Endothelial cell of umbilical vein (primary cell): ENCODE measurements at regions of chr5 and their contacts with region 1.

Region 1: GRCh38 chr5:15105796-15106393 is 234.3 kb upstream of the ANKH start:
- DNase-seq: peak; percentile 62
- H3K4me3 ChIP-seq: no peak overlapping the region
- H3K27ac ChIP-seq: no peak overlapping the region
- H3K4me1 ChIP-seq: no peaks in the 10 kb centered on the region
- H3K27me3 ChIP-seq: peaks cover 0 to 7% of the 10 kb centered on the region in 2 experiments
- CTCF ChIP-seq: peak; percentile 77 to 79
- POLR2A ChIP-seq: no peak

Region 2: GRCh38 chr5:15026011-15026893 is 79.6 kb before region 1 on chr5:
- CTCF ChIA-PET with region 1: no interaction called
- POLR2A ChIA-PET with region 1: no interaction called
- dilution Hi-C with region 1: no loop called
- intact Hi-C with region 1: no loop called
- DNase-seq: no peak
- H3K4me3 ChIP-seq: no peak overlapping the region
- H3K27ac ChIP-seq: no peak overlapping the region
- H3K4me1 ChIP-seq: no peaks in the 10 kb centered on the region
- H3K27me3 ChIP-seq: peaks cover 1 to 8% of the 10 kb centered on the region in 2 experiments
- CTCF ChIP-seq: no peak
- POLR2A ChIP-seq: no peak

Region 3: GRCh38 chr5:15116996-15117395 is 11.1 kb after region 1 on chr5:
- CTCF ChIA-PET with region 1: interaction called, 17 read pairs
- POLR2A ChIA-PET with region 1: no interaction called
- dilution Hi-C with region 1: no loop called
- intact Hi-C with region 1: no loop called
- DNase-seq: no peak
- H3K4me3 ChIP-seq: no peak overlapping the region
- H3K27ac ChIP-seq: no peak overlapping the region
- H3K4me1 ChIP-seq: no peaks in the 10 kb centered on the region
- H3K27me3 ChIP-seq: peaks cover 2 to 3% of the 10 kb centered on the region in 2 experiments
- CTCF ChIP-seq: no peak
- POLR2A ChIP-seq: no peak

Region 4: GRCh38 chr5:15794052-15794985 is 688.4 kb after region 1 on chr5:
- CTCF ChIA-PET with region 1: interaction called, 18 read pairs
- POLR2A ChIA-PET with region 1: no interaction called
- dilution Hi-C with region 1: no loop called
- intact Hi-C with region 1: loop called (anchors 10 kb)
- DNase-seq: peak; percentile 74
- H3K4me3 ChIP-seq: no peak overlapping the region
- H3K27ac ChIP-seq: peak overlapping the region; percentile 41
- H3K4me1 ChIP-seq: peaks cover 30% of the 10 kb centered on the region
- H3K27me3 ChIP-seq: no peaks in the 10 kb centered on the region
- CTCF ChIP-seq: peak in 1 of 2 donors; percentile 15
- POLR2A ChIP-seq: no peak

Region 5: DNA sequence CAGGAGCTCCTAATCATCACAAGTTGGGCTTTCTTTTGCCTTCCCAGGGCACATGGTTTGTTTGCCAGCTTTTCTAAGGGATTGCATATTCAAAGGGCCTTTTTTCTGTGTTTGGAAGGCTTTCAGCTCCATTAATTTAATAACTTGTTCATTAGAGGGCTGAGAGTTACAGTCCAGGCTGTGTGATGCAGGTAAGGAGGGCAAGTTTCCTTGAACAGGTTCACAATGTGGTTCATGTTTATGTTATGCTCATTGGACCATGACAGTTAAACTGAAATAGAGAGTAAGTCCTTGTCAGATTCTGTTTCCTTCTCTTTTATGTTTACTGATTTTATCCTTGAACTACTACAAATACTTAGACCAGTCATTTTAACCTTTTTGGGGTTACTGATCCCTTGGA is 899.3 kb after region 1 on chr5:
- CTCF ChIA-PET with region 1: interaction called, 10 read pairs
- POLR2A ChIA-PET with region 1: no interaction called
- dilution Hi-C with region 1: no loop called
- intact Hi-C with region 1: no loop called
- DNase-seq: no peak
- H3K4me3 ChIP-seq: no peak overlapping the region
- H3K27ac ChIP-seq: no peak overlapping the region
- H3K4me1 ChIP-seq: no peaks in the 10 kb centered on the region
- H3K27me3 ChIP-seq: no peaks in the 10 kb centered on the region
- CTCF ChIP-seq: no peak
- POLR2A ChIP-seq: no peak